Posterior cingulate gyrus (tissue), 11 donors: ENCODE measurements at regions of chr1 and their contacts with region 1.

Region 1: GRCh38 chr1:83998498-83999315 is at the start of gene TTLL7:
- DNase-seq: peak; percentile 85 to 99 (median 92)

Region 2: DNA sequence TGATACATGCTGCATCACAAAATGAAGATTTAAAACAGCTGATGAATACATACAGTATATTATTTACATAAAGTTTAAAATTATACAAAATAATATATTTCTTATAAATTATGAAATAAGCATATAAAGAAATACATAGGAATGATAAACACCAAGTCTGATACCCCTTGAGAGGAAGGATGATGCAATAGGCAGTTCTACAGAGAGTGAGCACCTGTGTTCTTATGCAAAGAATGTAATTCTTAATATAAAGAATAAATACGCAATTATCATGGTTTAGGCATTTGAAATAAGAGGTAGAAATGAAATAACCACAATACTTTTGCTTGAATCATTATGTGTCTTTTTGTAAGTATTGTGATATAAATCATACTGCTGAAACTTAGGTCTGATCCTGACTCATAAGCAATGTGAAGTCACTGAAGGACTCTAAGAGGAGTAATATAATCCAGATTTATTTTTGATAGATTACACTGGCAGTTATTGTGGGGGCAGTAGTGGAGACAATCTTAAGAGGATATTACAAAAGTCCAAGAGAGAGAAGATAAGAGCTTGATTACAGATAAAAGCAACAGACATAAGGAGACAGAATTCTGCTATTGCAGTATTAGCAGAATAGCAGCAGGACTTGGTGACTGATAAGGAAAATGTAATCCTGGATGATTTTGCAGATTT is 38.7 kb before region 1 on chr1:
- intact Hi-C with region 1: loop called (anchors 5 kb)
- DNase-seq: no peak

Region 3: DNA sequence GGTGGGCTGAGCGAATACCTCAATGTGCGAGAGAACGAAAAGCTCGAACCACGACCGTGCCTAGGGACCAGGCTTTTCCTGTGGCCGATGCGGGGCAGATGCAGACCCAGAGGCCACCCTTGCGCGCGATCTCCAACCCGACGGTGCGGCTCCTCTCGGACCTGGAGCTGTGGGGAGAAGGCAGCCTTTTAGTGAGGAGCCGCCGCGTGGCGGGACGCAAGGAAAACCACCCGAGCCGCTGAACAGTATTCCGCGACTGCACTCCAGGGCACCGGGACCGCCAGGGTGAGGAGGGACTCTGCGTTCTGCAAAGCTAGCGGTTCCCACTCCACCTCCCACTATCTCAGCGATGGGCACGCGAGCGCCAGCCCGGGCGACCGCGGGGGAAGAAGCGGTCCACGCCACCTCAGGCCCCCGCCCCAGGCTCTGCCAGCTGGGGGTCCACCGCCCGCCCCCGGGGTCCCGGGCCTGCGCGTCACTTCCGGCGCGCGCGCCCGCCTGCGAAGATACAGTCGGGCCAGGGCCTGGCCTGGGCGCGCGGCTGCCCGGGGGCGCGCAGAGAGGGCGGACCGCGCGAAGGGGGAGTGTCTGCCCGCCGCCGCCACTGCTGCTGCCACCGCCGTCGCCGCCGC is 78.9 kb after region 1 on chr1:
- intact Hi-C with region 1: loop called (anchors 5 kb)
- DNase-seq: peak; percentile 63 to 98 (median 76)